CD8-positive, alpha-beta T cell (primary cell): ENCODE measurements at regions of chr3 and their contacts with region 1.

Region 1: GRCh38 chr3:39126532-39127071 is 19.1 kb downstream of the TTC21A start:
- DNase-seq: peak in 4 of 9 experiments; percentile 41 to 59 (median 47)
- ATAC-seq: peak; percentile 49
- H3K4me3 ChIP-seq: no peak overlapping the region
- H3K4me3 Mint-ChIP-seq: no peak overlapping the region
- H3K27ac ChIP-seq: no peak overlapping the region
- H3K27ac Mint-ChIP-seq: no peak overlapping the region
- H3K4me1 ChIP-seq: peaks cover 16% of the 10 kb centered on the region
- H3K4me1 Mint-ChIP-seq: peaks cover 27% of the 10 kb centered on the region
- H3K27me3 ChIP-seq: no peaks in the 10 kb centered on the region
- H3K27me3 Mint-ChIP-seq: no peaks in the 10 kb centered on the region
- CTCF ChIP-seq: no peak

Region 2: GRCh38 chr3:38940394-38940793 is 186.2 kb before region 1 on chr3:
- CTCF ChIA-PET with region 1: no interaction called
- POLR2A ChIA-PET with region 1: no interaction called
- intact Hi-C with region 1: no loop called
- DNase-seq: no peak
- ATAC-seq: no peak
- H3K4me3 ChIP-seq: no peak overlapping the region
- H3K4me3 Mint-ChIP-seq: no peak overlapping the region
- H3K27ac ChIP-seq: no peak overlapping the region
- H3K27ac Mint-ChIP-seq: no peak overlapping the region
- H3K4me1 ChIP-seq: no peaks in the 10 kb centered on the region
- H3K4me1 Mint-ChIP-seq: no peaks in the 10 kb centered on the region
- H3K27me3 ChIP-seq: no peaks in the 10 kb centered on the region
- H3K27me3 Mint-ChIP-seq: no peaks in the 10 kb centered on the region
- CTCF ChIP-seq: no peak

Region 3: DNA sequence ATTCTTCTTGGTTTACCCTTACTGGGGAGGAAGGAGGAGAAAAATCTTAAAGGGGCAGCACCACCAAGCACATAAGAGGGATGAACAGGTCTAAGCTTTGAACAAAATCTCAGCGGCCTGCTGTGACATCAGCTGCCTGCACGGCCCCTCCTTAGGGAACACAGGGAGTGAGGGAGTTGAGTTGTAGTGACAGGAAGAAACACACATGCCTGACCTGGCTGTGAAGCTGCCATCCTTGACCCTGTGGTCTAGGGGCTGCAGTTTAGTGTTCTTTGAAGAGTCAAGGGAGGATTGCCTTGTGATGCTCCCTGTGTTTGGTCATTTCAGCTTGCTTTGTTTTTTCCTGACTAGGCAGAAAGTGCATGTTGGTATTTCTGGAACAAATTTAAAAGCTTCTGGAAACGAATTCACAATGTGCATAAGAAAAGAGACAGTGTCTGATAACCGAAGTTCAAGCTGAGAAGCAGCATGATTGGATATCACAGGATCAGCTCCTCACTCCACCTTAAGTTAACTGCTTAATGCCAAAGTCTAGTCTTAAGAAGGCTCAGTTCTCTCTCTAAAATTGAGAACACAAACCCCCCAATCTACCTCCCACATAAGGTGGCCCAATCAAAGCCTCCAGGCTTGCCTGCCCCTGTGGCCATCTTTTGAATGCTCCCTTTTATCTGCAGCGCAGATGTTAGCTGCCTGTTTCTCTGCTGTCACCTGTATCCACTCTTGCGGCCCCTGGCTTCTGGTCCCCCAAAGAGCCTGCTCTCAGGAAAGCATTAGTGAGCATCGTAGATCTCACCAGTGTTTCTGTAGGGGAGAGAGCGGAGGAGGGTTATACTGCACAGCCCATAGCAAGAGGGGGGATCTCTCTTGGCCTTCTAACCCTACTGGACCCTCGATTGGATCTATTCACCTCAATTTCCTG is 157.0 kb before region 1 on chr3:
- CTCF ChIA-PET with region 1: no interaction called
- POLR2A ChIA-PET with region 1: no interaction called
- intact Hi-C with region 1: no loop called
- DNase-seq: no peak
- ATAC-seq: no peak
- H3K4me3 ChIP-seq: no peak overlapping the region
- H3K4me3 Mint-ChIP-seq: no peak overlapping the region
- H3K27ac ChIP-seq: no peak overlapping the region
- H3K27ac Mint-ChIP-seq: no peak overlapping the region
- H3K4me1 ChIP-seq: no peaks in the 10 kb centered on the region
- H3K4me1 Mint-ChIP-seq: no peaks in the 10 kb centered on the region
- H3K27me3 ChIP-seq: no peaks in the 10 kb centered on the region
- H3K27me3 Mint-ChIP-seq: peaks cover 11% of the 10 kb centered on the region
- CTCF ChIP-seq: no peak

Region 4: GRCh38 chr3:39107388-39108199 is 19.0 kb before region 1 on chr3 and contains the starts of genes GORASP1 and TTC21A:
- CTCF ChIA-PET with region 1: interaction called, 11 read pairs
- POLR2A ChIA-PET with region 1: no interaction called
- intact Hi-C with region 1: no loop called
- DNase-seq: peak; percentile 16 to 83 (median 62)
- ATAC-seq: peak; percentile 61
- H3K4me3 ChIP-seq: peak within 1 kb of the TSS; percentile 75 to 95
- H3K4me3 Mint-ChIP-seq: peak within 1 kb of the TSS; percentile 90
- H3K27ac ChIP-seq: peak within 1 kb of the TSS in 1 of 2 experiments; percentile 69
- H3K27ac Mint-ChIP-seq: peak within 1 kb of the TSS; percentile 87
- H3K4me1 ChIP-seq: peaks cover 29% of the 10 kb centered on the region
- H3K4me1 Mint-ChIP-seq: peaks cover 49% of the 10 kb centered on the region
- H3K27me3 ChIP-seq: no peaks in the 10 kb centered on the region
- H3K27me3 Mint-ChIP-seq: no peaks in the 10 kb centered on the region
- CTCF ChIP-seq: no peak
- total RNA-seq, gene GORASP1: 13.9 to 20.2 TPM
- total RNA-seq, gene TTC21A: 1.8 to 2.3 TPM

Region 5: GRCh38 chr3:39146984-39147591 is 20.5 kb after region 1 on chr3:
- CTCF ChIA-PET with region 1: interaction called, 10 read pairs
- POLR2A ChIA-PET with region 1: interaction called, 3 read pairs
- intact Hi-C with region 1: no loop called
- DNase-seq: peak in 8 of 9 experiments; percentile 58 to 73 (median 68)
- ATAC-seq: peak; percentile 24
- H3K4me3 ChIP-seq: peak overlapping the region; percentile 29 to 55
- H3K4me3 Mint-ChIP-seq: peak overlapping the region; percentile 95
- H3K27ac ChIP-seq: peak overlapping the region; percentile 63 to 76
- H3K27ac Mint-ChIP-seq: peak overlapping the region; percentile 98
- H3K4me1 ChIP-seq: peaks cover 57% of the 10 kb centered on the region
- H3K4me1 Mint-ChIP-seq: peaks cover 67% of the 10 kb centered on the region
- H3K27me3 ChIP-seq: no peaks in the 10 kb centered on the region
- H3K27me3 Mint-ChIP-seq: no peaks in the 10 kb centered on the region
- CTCF ChIP-seq: no peak

Region 6: DNA sequence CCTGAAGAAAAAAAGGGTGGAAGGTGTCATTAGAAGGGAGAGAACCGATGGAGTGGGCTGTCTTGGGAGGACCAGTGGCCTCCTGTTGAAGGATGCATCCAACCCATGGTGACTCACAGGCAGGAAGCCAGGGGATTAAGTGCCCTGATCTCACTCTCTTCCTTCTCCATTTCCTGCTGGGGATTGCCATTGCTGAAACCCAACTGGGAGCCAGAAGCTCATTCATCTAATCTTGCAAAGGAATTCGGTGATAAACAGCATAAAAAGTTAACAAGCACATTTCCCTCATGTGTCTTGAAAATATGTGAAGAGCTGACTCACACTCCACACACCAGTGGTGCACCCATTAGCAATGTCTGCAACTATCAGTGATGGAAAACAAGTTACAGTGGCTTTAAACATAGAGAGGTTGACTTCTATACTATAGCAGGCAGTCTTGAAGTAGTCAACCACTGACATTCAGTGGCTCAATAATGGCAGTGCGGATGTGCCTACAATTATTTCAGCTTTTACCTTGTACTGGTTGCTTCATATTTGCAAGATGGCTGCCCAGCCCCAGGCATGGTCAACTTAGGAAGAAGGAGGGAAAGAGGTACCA is 39.6 kb after region 1 on chr3:
- CTCF ChIA-PET with region 1: interaction called, 13 read pairs
- POLR2A ChIA-PET with region 1: no interaction called
- intact Hi-C with region 1: no loop called
- DNase-seq: peak in 2 of 9 experiments; percentile 23 to 43
- ATAC-seq: peak; percentile 62
- H3K4me3 ChIP-seq: no peak overlapping the region
- H3K4me3 Mint-ChIP-seq: no peak overlapping the region
- H3K27ac ChIP-seq: no peak overlapping the region
- H3K27ac Mint-ChIP-seq: no peak overlapping the region
- H3K4me1 ChIP-seq: no peaks in the 10 kb centered on the region
- H3K4me1 Mint-ChIP-seq: no peaks in the 10 kb centered on the region
- H3K27me3 ChIP-seq: no peaks in the 10 kb centered on the region
- H3K27me3 Mint-ChIP-seq: no peaks in the 10 kb centered on the region
- CTCF ChIP-seq: no peak

Region 7: DNA sequence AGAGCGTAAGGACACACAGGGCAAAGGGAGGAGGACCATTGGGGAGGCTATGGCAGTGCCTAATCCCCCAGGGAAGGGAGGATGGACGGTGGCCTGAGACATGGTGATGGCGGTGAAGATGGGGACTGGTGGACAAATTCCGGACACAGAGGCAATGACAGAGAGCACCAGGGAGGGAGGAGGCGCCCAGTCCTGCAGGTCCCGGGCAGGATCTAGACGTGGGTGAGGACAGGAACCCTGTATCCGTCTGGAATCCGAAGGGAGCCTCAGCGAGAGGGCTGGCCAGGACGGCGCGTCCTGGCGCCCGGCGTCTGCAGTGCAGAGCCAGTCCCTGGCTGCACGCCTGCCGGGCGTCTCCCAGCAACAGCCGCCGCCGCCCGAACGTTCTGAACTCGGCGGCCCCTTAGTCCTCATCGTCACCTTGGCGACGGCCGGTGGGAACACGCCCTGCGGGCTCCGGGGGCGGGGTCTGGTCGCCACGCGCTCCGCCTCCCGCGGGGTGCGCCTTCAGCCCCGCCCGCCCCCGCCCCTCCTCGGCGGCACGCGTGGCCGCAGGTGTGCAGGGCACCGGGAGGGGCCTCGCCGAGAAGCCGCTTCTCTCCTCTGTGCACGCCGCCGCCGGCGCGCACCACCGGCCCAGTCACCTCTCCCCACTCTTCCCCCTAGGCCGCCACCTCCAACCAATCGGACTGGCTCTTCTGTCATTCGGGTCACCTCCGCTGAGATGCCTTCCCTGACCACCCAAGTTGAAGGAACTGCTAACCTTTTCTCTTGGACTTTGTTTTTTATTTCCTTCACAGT is 54.1 kb after region 1 on chr3:
- CTCF ChIA-PET with region 1: interaction called, 5 read pairs
- POLR2A ChIA-PET with region 1: no interaction called
- intact Hi-C with region 1: loop called in 1 of 2 experiments (anchors 2 kb)
- DNase-seq: peak; percentile 79 to 96 (median 88)
- ATAC-seq: peak; percentile 89
- H3K4me3 ChIP-seq: peak overlapping the region; percentile 39 to 44
- H3K4me3 Mint-ChIP-seq: peak overlapping the region; percentile 76
- H3K27ac ChIP-seq: peak overlapping the region; percentile 39 to 62
- H3K27ac Mint-ChIP-seq: peak overlapping the region; percentile 85
- H3K4me1 ChIP-seq: peaks cover 27% of the 10 kb centered on the region
- H3K4me1 Mint-ChIP-seq: peaks cover 37% of the 10 kb centered on the region
- H3K27me3 ChIP-seq: no peaks in the 10 kb centered on the region
- H3K27me3 Mint-ChIP-seq: no peaks in the 10 kb centered on the region
- CTCF ChIP-seq: no peak

Region 8: DNA sequence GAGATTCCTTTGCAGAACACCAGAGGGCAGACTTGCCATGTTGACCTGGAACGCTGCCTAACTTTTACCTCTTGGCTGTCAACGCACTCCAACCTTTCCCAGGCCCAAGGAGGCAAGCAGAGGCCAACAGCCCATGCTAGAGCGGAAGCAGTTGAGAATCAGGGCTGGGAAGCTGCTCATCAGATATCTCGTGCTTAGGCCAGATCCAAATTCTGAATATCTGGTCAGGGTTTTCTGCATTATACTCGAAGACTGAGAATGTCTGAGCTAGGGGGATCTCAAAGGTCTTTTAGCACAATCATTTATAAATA is 63.3 kb after region 1 on chr3:
- CTCF ChIA-PET with region 1: interaction called, 16 read pairs
- POLR2A ChIA-PET with region 1: no interaction called
- intact Hi-C with region 1: no loop called
- DNase-seq: peak; percentile 14 to 82 (median 53)
- ATAC-seq: peak; percentile 89
- H3K4me3 ChIP-seq: no peak overlapping the region
- H3K4me3 Mint-ChIP-seq: no peak overlapping the region
- H3K27ac ChIP-seq: no peak overlapping the region
- H3K27ac Mint-ChIP-seq: no peak overlapping the region
- H3K4me1 ChIP-seq: no peaks in the 10 kb centered on the region
- H3K4me1 Mint-ChIP-seq: peaks cover 6% of the 10 kb centered on the region
- H3K27me3 ChIP-seq: no peaks in the 10 kb centered on the region
- H3K27me3 Mint-ChIP-seq: no peaks in the 10 kb centered on the region
- CTCF ChIP-seq: peak; percentile 69